ENCODE measurements at regions of chr3 and their contacts with region 1.

Region 1: DNA sequence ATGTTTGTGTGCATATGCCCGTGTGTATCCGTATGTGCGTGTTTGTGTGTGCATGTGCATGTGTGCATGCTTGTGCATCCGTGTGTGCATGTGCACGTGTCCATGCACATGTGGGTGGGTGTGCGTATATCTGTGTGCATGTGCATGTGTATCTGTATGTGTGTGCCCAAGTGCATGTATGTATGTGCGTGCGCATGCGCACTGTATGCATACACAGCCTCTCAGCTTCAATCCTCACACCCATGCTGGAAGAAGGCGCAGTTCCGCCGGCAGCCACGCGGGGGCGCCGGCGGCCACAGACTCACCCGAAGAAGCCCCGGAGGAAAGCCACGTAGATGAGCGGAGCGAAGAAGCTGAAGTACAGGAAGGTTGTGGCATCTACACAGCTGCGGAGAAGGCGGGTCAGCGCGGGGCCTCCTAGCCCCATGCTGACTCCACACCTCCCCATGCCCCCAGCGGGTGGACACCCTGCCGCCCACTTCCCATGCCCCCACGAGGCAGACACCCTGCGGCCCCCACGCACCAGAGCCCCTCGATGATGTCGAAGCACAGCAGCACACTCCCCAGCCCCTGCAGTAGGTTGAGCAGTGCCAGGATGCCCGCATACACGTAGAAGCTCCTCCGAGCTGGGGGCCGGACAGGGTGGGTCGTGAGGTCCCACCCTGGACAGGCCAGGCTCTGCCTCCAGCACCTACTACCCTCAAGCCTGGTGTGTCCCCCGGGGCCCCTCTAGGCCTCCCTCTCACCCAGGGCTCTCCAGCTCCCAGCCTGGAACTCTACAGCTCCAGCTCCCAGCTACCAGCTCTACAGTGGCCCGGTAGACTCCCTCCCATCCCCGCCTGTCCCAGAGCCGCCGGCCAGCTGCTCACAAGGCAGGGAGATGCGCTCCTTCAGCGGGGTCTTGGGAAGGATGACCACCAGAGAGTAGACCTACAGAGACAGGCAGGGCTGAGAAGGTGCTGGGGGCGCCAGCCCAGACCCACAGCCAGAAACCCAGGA is 15.4 kb downstream of the TPRA1 start:
- ATAC-seq: peak; percentile 83 to 92 (median 90)
- H3K4me3 ChIP-seq: no peak overlapping the region
- H3K27ac ChIP-seq: peak overlapping the region in 1 of 2 donors; percentile 56
- H3K4me1 ChIP-seq: peaks cover 4 to 5% of the 10 kb centered on the region in 2 donors

Region 2: GRCh38 chr3:126746395-126747177 is 828.6 kb before region 1 on chr3:
- in situ Hi-C with region 1: loop called in 1 of 9 experiments (anchors 25 kb)
- ATAC-seq: peak in 5 of 8 experiments; percentile 86 to 92 (median 90)
- H3K4me3 ChIP-seq: no peak overlapping the region
- H3K27ac ChIP-seq: peak overlapping the region in 1 of 2 donors; percentile 23
- H3K4me1 ChIP-seq: peaks cover 24 to 36% of the 10 kb centered on the region in 2 donors

Region 3: DNA sequence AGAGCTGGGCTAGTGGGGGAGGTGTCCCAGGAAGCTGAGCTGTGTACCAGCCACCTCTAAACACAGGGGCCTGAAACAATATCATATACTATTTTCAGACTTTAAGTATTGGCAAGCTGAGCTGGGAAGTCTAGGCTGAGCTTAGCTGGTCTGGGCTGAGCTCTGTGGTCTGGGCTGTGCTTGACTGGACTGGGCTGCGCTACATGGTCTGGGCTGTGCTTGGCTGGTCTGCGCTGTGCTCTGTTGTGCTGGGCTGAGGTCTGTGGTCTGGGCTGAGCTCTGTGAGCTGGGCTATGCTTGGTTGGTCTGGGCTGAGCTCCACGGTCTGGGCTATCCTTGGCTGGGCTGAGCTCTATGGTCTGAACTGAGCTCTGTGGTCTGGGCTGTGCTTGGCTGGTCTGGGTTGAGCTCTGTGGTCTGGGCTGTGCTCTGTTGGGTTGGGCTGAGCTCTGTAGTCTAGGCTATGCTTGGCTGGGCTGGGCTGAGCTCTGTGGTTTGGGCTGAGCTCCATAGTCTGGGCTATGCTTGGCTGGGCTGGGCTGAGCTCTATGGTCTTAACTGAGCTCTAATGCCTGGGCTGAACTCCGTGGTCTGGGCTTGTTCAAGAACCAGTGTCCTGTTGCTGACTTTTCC is 500.3 kb before region 1 on chr3:
- in situ Hi-C with region 1: no loop called
- ATAC-seq: peak in 5 of 8 experiments; percentile 20 to 94 (median 90)
- H3K4me3 ChIP-seq: no peak overlapping the region
- H3K27ac ChIP-seq: no peak overlapping the region
- H3K4me1 ChIP-seq: peaks cover 0 to 5% of the 10 kb centered on the region in 2 donors

Region 4: DNA sequence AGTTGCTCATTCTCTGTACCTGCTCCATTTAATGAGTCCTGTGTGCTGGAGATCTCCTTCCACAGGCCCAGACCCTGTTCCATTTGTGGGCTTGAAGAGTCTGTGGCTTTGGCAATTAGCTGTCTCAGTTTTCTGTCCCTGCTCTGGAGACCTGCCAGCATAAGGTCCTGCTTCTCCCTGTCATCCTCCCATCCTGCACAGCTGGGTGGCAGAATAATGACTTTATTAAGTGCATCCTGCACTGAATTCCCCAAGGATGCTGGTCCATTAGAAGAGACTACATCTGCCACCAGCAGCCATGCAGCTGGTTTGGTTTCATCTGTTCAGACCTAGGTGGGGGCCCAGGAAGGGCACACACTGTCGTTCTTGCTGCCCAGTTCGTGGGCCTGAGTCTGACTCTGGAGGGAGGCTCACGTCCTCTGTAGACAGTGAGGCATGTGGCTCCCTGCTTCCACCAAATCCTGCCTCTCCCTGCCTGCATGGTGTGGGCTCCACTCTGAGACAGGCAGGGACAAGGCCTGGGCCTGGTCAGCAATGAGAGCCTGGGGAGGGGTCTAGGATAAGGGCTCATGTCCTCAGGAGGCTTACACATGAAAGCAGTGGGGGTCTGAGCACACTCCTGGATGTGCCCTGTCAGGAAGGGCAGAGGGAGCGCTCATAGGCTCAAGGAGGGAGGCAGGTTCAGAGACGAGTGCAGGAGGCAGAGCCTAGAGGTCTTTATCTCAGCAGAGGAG is 460.7 kb before region 1 on chr3:
- in situ Hi-C with region 1: no loop called
- ATAC-seq: no peak
- H3K4me3 ChIP-seq: no peak overlapping the region
- H3K27ac ChIP-seq: no peak overlapping the region
- H3K4me1 ChIP-seq: peaks cover 4 to 11% of the 10 kb centered on the region in 2 donors

Region 5: GRCh38 chr3:127723011-127723567 is 147.9 kb after region 1 on chr3:
- in situ Hi-C with region 1: no loop called
- ATAC-seq: peak in 5 of 8 experiments; percentile 48 to 69 (median 65)
- H3K4me3 ChIP-seq: no peak overlapping the region
- H3K27ac ChIP-seq: no peak overlapping the region
- H3K4me1 ChIP-seq: peaks cover 22 to 34% of the 10 kb centered on the region in 2 donors

Measured in motor neuron (in vitro differentiated cells).